ENCODE measurements at regions of chr1 and their contacts with region 1.

Region 1: GRCh38 chr1:985126-985525 is 3.2 kb upstream of the PERM1 start:
- DNase-seq: no peak
- H3K4me3 ChIP-seq: no peak overlapping the region
- H3K27ac ChIP-seq: no peak overlapping the region
- H3K4me1 ChIP-seq: peaks cover 0 to 9% (median 4%) of the 10 kb centered on the region in 6 donors
- H3K27me3 ChIP-seq: peaks cover 0 to 77% (median 14%) of the 10 kb centered on the region in 7 donors
- CTCF ChIP-seq: no peak
- POLR2A ChIP-seq: no peak

Region 2: GRCh38 chr1:1048765-1049164 is 63.6 kb after region 1 on chr1:
- intact Hi-C with region 1: no loop called
- DNase-seq: no peak
- H3K4me3 ChIP-seq: no peak overlapping the region
- H3K27ac ChIP-seq: no peak overlapping the region
- H3K4me1 ChIP-seq: no peaks in the 10 kb centered on the region
- H3K27me3 ChIP-seq: no peaks in the 10 kb centered on the region
- CTCF ChIP-seq: no peak
- POLR2A ChIP-seq: no peak

Region 3: DNA sequence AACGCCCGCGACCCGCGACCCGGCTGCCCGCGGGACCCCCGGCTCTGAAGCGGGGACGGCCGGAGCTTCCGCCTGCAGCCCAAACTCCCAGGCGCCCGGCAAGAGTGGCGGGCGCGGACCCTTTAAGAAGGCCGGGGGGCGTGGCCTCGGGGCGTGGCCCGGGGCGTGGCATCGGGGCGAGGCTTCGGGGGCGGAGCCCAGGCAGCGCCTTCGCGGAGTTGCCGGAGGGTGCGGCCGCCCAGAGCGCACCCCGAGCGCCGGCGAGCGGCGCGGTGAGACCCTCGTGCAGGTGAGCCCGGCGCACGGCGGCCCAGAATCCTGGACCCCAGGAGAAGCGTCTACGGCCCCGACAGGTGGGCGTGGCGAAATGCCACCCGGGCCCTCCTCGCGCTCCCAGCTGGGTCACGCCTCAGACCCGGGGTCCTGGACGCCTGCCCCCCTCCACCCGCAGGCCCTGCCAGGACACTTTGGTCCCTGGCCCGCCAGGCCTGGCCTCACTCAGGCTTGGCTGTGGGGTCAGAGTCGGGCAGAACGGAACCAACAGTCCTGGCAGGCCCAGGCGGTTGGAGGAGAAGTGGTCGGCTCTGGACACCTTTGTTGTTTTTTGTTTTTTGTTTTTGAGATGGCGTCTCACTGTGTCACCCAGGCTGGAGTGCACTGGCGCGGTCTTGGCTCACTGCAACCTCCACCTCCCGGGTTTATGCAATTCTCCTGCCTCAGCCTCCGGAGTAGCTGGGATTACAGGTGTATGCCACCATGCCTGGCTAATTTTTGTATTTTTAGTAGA is 74.6 kb after region 1 on chr1:
- intact Hi-C with region 1: loop called (anchors 5 kb)
- DNase-seq: peak; percentile 96
- H3K4me3 ChIP-seq: peak overlapping the region; percentile 43 to 87 (median 62)
- H3K27ac ChIP-seq: peak overlapping the region in 1 of 8 donors; percentile 29
- H3K4me1 ChIP-seq: peaks cover 17 to 51% (median 35%) of the 10 kb centered on the region in 6 donors
- H3K27me3 ChIP-seq: peaks cover 0 to 81% (median 71%) of the 10 kb centered on the region in 7 donors
- CTCF ChIP-seq: peak in 2 of 11 experiments; percentile 22 to 51
- POLR2A ChIP-seq: no peak

Region 4: GRCh38 chr1:1250786-1251284 is 265.7 kb after region 1 on chr1:
- intact Hi-C with region 1: no loop called
- DNase-seq: peak; percentile 91
- H3K4me3 ChIP-seq: no peak overlapping the region
- H3K27ac ChIP-seq: peak overlapping the region in 7 of 8 donors; percentile 7 to 76 (median 46)
- H3K4me1 ChIP-seq: peaks cover 3 to 44% (median 22%) of the 10 kb centered on the region in 6 donors
- H3K27me3 ChIP-seq: peaks cover 0 to 24% (median 20%) of the 10 kb centered on the region in 7 donors
- CTCF ChIP-seq: no peak
- POLR2A ChIP-seq: no peak

Measured in spleen (tissue), 13 donors.